Thyroid gland (tissue), 4 donors: ENCODE measurements at regions of chr12 and their contacts with region 1.

Region 1: DNA sequence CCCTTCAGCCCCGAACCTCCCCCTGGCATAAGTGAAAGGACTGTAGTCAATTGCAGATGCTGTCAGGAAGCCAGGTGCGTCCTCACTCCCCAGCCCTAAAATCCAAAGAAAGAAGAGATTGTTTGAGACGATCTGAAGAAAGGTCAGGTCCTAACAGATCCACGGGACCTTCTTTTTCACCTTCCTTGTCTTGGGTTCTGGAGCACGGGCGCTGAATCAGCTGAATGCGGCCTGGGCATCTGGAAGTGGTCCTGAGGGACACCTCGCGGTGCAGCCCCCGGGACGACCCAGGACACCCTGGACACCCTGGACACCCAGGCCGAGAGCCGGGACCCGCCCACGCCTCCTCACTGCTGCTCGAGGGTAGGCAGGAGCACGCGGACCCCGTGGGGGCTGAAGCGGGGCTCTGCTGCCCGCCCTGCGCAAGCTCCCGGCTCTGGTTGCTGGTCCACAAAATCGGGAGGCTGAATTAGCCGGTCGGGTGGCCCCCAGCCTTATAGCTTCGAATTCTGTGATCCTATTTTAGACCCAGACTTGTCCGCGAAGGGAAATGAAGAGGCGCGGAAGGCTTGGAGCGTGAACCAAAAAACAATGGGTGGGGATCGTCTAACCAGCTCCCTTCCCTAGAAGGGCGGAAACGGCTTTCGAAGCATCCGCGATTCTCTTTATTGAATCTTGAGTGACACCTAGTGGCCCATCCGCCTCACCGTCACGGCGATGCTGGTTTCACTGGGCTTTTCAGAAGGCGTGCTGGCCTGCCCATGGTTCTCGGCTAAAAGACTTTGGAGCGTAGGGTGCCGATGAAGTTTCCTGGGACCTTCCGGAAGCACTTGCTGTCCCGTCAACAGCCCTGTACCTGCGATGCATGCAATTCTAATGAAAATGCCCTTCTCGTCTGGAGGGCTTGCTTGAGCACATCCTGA is 46.4 kb upstream of the PLXNC1 start:
- DNase-seq: peak; percentile 82 to 86
- H3K4me3 ChIP-seq: peak overlapping the region in 2 of 3 donors; percentile 39 to 41
- H3K27ac ChIP-seq: peak overlapping the region in 1 of 3 donors; percentile 68
- H3K4me1 ChIP-seq: peaks cover 0 to 7% of the 10 kb centered on the region in 2 donors
- H3K27me3 ChIP-seq: no peaks in the 10 kb centered on the region
- CTCF ChIP-seq: peak; percentile 61 to 87 (median 76)
- POLR2A ChIP-seq: no peak

Region 2: GRCh38 chr12:93502802-93503623 is 599.0 kb before region 1 on chr12:
- intact Hi-C with region 1: loop called (anchors 2 kb)
- DNase-seq: peak; percentile 34 to 52
- H3K4me3 ChIP-seq: no peak overlapping the region
- H3K27ac ChIP-seq: no peak overlapping the region
- H3K4me1 ChIP-seq: no peaks in the 10 kb centered on the region
- H3K27me3 ChIP-seq: no peaks in the 10 kb centered on the region
- CTCF ChIP-seq: peak in 5 of 6 experiments; percentile 70 to 82 (median 76)
- POLR2A ChIP-seq: no peak

Region 3: GRCh38 chr12:93766796-93767523 is 335.0 kb before region 1 on chr12:
- intact Hi-C with region 1: loop called (anchors 5 kb)
- DNase-seq: peak; percentile 27 to 41
- H3K4me3 ChIP-seq: no peak overlapping the region
- H3K27ac ChIP-seq: peak overlapping the region in 1 of 3 donors; percentile 25
- H3K4me1 ChIP-seq: peaks cover 0 to 9% of the 10 kb centered on the region in 2 donors
- H3K27me3 ChIP-seq: no peaks in the 10 kb centered on the region
- CTCF ChIP-seq: peak in 5 of 6 experiments; percentile 13 to 86 (median 67)
- POLR2A ChIP-seq: no peak

Region 4: GRCh38 chr12:94498073-94498472 is 396.1 kb after region 1 on chr12:
- intact Hi-C with region 1: no loop called
- DNase-seq: no peak
- H3K4me3 ChIP-seq: no peak overlapping the region
- H3K27ac ChIP-seq: no peak overlapping the region
- H3K4me1 ChIP-seq: no peaks in the 10 kb centered on the region
- H3K27me3 ChIP-seq: no peaks in the 10 kb centered on the region
- CTCF ChIP-seq: no peak
- POLR2A ChIP-seq: no peak